ENCODE measurements at regions of chr3 and their contacts with region 1.

Region 1: GRCh38 chr3:183253902-183254833 is 1.1 kb downstream of the B3GNT5 start:
- DNase-seq: peak; percentile 82
- ATAC-seq: peak; percentile 76

Region 2: GRCh38 chr3:183122257-183122932 is 131.8 kb before region 1 on chr3:
- intact Hi-C with region 1: no loop called
- DNase-seq: no peak
- ATAC-seq: no peak

Region 3: DNA sequence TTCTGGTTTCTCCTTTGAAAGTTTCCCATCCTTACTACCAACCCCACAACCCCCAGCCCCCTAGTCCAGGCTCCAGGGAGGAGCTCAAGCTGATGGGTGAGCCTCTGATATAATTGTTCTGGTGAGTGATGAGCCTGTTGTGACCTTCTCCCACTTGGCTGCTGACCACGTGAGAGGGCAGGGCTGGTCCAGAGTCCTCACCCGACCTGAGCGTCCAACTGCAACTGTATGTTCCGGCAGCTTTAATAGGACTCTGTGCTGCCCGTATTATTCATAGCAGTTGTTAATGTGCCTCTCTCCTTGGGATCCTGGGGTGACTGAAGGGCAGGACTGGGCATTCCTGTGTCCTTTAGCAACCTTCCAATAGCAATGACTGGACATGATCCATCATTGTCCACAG is 55.1 kb after region 1 on chr3:
- intact Hi-C with region 1: loop called (anchors 2 kb)
- DNase-seq: peak; percentile 71
- ATAC-seq: peak; percentile 89